Activated T-helper 1 cell treated with anti-CD3 and anti-CD28 coated beads, Interleukin-12 subunit alpha, Interleukin-12 subunit beta, Interleukin-2, Interleukin-4 antibody, amounts not matched to agents 30 ng/mL and 10 ng/mL and 1 ng/mL, durations not matched to agents 14 hours and 24 hours and 36 hours (primary cell): ENCODE measurements at regions of chr4 and their contacts with region 1.

Region 1: DNA sequence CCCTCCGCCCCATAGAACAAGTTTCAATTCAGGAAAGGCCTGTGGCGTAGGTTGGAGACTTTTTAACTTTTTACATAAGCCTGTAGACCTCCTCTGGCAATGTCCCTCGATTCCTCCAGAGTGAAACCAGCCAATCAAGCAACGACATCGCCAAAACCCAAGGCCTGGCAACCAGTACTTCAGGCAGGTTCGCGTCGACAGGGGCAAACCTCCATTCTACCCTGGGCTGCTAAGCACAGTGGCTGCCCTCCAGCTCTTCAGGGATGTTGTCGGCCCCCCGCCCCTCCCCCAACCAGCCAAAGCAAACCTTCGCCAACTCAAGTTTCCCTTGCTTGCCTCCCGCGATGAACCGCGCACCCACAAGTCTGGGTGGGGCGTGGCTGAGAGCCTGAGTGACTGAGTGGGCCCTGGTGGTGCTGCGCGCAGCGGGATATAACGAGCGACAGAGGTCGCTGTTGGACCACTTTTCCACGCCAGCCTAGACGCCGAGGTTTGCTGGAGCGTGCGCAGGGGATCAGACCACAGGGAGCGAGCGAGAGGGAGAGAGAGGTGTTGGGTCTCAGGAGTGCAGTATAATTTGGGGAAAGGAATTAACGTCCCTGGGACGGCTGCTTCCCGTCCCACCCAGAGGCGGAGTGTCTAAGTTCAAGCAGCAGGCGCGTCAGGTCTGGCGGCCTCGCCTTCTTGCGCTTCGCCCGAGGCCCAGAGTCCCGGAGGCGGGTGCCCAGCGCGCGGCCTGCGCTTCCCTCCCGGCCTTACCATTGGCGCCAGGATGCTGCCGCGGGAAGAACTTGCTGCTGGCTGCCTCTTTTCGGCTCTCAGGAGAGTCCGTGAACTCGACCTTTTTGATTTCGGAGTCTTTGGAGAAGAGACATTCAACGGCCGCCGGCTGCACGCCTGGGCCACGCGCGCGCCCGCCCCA is 9.0 kb upstream of the PITX2 start:
- DNase-seq: no peak
- H3K4me3 Mint-ChIP-seq: peak overlapping the region; percentile 2
- H3K27ac Mint-ChIP-seq: peak overlapping the region; percentile 57
- H3K4me1 Mint-ChIP-seq: peaks cover 5% of the 10 kb centered on the region
- H3K27me3 Mint-ChIP-seq: peaks cover 80% of the 10 kb centered on the region

Region 2: DNA sequence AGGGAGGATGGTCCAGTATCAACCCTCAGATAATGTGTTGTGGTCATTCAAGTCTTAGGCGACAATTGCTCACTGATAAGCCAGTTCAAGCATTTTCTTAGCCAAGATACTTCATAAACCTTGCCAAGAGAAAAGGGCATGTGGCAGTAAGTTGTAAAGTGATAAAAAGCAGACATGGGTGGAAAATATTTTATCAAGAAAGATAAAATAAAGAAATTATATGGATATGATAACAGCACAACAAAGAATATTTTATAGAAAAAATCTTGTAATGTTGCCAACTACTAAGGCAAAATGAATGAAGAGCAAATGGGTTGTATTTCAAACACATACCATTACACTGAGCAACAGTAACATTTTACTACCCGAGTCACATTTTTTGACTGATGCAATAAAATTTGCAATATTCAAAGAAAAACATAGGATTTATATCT is 208.4 kb after region 1 on chr4:
- intact Hi-C with region 1: no loop called
- DNase-seq: no peak
- H3K4me3 Mint-ChIP-seq: no peak overlapping the region
- H3K27ac Mint-ChIP-seq: no peak overlapping the region
- H3K4me1 Mint-ChIP-seq: no peaks in the 10 kb centered on the region
- H3K27me3 Mint-ChIP-seq: no peaks in the 10 kb centered on the region

Region 3: GRCh38 chr4:112515304-112516067 is 1883.6 kb after region 1 on chr4:
- intact Hi-C with region 1: loop called (anchors 5 kb)
- DNase-seq: peak; percentile 49
- H3K4me3 Mint-ChIP-seq: peak overlapping the region; percentile 95
- H3K27ac Mint-ChIP-seq: peak overlapping the region; percentile 93
- H3K4me1 Mint-ChIP-seq: peaks cover 79% of the 10 kb centered on the region
- H3K27me3 Mint-ChIP-seq: peaks cover 82% of the 10 kb centered on the region